A549 (cell line): ENCODE measurements at regions of chr15 and their contacts with region 1.

Region 1: GRCh38 chr15:45429974-45430792 is 51.8 kb upstream of the GATM start:
- DNase-seq: peak; percentile 34 to 49
- ATAC-seq: peak; percentile 93 to 96
- H3K4me3 ChIP-seq: peak overlapping the region; percentile 58
- H3K27ac ChIP-seq: peak overlapping the region; percentile 57 to 83; a peak in 5 of 6 replicates
- H3K4me1 ChIP-seq: 0 out of 3 replicates have a peak, but pooled peaks cover 4% of the 10 kb centered on the region
- CTCF ChIP-seq: peak; percentile 99
- EP300 ChIP-seq: no peak
- POLR2A ChIP-seq: no peak
- RAD21 ChIP-seq: peak; percentile 77 to 97

Region 2: GRCh38 chr15:44999105-44999504 is 431.1 kb before region 1 on chr15:
- CTCF ChIA-PET with region 1: no interaction called
- POLR2A ChIA-PET with region 1: no interaction called
- DNase-seq: no peak
- ATAC-seq: no peak
- H3K4me3 ChIP-seq: no peak overlapping the region
- H3K27ac ChIP-seq: no peak overlapping the region
- H3K4me1 ChIP-seq: no peaks in the 10 kb centered on the region
- CTCF ChIP-seq: no peak
- EP300 ChIP-seq: no peak
- POLR2A ChIP-seq: no peak
- RAD21 ChIP-seq: no peak

Region 3: DNA sequence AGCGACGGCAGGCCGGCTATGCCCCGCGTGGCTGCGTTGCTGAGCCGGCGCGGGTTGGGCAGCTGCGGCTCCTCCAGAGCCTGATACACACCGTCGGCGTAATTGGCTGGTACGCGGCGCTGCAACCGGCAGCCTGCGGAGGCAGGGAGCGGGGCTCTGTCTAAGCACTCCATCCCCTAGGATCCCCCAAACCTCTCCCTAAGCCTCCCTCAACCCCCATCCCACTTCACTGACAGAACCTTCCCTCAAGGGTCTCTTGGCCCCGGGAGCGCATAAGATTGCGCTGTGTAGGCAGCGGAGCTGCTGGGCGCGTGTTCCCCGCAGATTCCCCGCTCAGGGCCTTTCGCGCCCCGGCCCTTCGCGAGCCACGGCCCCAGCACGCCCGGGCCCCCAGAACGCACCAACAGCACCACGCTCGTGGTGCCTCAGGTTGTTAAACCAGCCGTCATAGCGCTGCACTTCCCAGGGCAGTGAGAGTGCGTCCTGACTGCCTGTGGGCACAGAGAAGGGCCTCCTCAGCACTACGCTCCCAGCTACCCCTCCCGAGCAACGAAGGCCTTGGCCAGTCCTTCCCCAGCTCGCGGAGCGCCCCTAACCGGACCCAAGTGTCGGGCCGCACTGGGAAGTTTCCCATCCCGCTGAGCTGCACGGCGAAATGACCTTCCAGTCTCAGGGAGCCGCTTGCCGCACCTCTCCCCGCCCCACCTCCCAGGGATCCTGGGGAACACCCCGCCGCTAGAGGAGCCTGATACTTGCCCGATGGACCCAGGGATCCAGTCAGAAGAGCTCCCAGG is 317.4 kb before region 1 on chr15:
- CTCF ChIA-PET with region 1: no interaction called
- POLR2A ChIA-PET with region 1: no interaction called
- DNase-seq: peak in 1 of 2 experiments; percentile 13
- ATAC-seq: peak; percentile 41 to 56
- H3K4me3 ChIP-seq: peak overlapping the region; percentile 8; the same call in 1 of the 3 replicates
- H3K27ac ChIP-seq: no peak overlapping the region
- H3K4me1 ChIP-seq: no peaks in the 10 kb centered on the region
- CTCF ChIP-seq: no peak
- EP300 ChIP-seq: no peak
- POLR2A ChIP-seq: no peak
- RAD21 ChIP-seq: no peak

Region 4: DNA sequence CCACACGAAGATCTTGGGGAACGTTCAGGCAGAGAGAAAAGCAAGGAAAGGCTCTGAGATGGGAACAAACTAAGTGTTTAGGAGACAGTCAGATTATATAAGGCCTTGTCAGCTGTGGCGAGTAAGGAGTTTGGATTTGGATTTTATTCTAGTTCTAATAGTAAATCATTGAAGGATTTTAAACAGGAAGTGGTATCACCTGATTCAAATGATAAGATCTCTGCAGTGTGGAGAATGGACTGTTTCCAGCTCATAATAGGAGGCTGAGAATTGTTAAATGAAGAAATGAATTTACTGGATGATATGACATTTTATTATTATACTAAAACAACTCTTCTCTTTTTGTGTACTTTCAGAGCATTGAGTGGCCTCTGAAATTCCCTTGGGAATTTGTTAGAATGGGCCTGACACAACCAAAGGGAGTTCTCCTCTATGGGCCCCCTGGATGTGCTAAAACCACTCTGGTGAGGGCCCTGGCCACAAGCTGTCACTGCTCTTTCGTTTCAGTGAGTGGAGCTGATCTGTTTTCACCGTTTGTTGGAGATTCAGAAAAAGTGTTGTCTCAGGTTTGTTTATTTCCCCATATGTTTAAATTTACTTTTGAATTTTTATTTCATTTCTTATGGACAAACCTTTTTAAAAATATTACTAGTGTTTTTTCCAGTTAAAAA is 15.8 kb before region 1 on chr15:
- CTCF ChIA-PET with region 1: interaction called, 34 read pairs
- POLR2A ChIA-PET with region 1: no interaction called
- DNase-seq: no peak
- ATAC-seq: no peak
- H3K4me3 ChIP-seq: no peak overlapping the region
- H3K27ac ChIP-seq: no peak overlapping the region
- H3K4me1 ChIP-seq: no peaks in the 10 kb centered on the region
- CTCF ChIP-seq: no peak
- EP300 ChIP-seq: no peak
- POLR2A ChIP-seq: no peak
- RAD21 ChIP-seq: no peak